Cardiac septum (tissue), 1 donor: ENCODE measurements at regions of chr5 and their contacts with region 1.

Region 1: DNA sequence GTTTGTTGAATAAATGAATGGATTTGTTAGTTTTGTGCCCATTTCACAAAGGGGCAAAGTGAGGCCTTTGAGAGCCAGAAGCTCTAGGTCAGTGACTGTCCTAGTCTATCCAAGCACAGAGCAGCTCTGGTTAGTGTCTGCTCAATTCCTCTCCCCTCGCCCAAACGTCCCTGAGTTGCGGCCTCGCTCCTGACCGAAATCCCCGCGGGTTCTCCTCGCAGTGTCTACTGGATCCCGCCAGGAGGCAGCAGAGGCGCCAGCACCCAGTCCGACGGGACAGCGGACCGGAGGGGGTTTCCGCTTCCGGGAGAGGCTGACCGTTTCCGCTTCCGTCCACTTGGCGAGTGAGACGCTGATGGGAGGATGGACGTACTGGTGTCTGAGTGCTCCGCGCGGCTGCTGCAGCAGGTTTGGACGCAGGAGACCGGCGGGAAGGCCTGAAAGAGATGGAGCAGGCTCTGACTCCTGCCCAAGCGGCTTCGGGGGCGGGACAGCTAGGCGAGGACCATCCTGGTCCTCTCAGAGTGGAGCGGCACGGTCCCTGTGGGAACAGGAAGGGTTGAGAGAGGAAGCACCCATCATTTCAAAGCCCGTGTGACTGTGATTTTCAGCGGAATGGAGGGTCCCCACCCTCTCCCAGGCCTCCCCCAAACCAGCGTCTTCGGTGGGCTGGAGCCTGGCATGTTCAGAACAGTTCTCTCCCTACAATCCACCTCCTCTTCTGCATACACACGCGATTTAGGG is at the start of gene RARS1:
- DNase-seq: peak; percentile 97
- total RNA-seq, gene RARS1: 47.4 TPM

Region 2: GRCh38 chr5:168270000-168270399 is 216.3 kb before region 1 on chr5:
- intact Hi-C with region 1: loop called (anchors 5 kb)
- DNase-seq: no peak

Region 3: GRCh38 chr5:168291962-168292776 is 194.1 kb before region 1 on chr5:
- intact Hi-C with region 1: no loop called
- DNase-seq: no peak

Region 4: GRCh38 chr5:168579488-168580226 is 93.3 kb after region 1 on chr5:
- intact Hi-C with region 1: loop called (anchors 5 kb)
- DNase-seq: peak; percentile 98

Region 5: DNA sequence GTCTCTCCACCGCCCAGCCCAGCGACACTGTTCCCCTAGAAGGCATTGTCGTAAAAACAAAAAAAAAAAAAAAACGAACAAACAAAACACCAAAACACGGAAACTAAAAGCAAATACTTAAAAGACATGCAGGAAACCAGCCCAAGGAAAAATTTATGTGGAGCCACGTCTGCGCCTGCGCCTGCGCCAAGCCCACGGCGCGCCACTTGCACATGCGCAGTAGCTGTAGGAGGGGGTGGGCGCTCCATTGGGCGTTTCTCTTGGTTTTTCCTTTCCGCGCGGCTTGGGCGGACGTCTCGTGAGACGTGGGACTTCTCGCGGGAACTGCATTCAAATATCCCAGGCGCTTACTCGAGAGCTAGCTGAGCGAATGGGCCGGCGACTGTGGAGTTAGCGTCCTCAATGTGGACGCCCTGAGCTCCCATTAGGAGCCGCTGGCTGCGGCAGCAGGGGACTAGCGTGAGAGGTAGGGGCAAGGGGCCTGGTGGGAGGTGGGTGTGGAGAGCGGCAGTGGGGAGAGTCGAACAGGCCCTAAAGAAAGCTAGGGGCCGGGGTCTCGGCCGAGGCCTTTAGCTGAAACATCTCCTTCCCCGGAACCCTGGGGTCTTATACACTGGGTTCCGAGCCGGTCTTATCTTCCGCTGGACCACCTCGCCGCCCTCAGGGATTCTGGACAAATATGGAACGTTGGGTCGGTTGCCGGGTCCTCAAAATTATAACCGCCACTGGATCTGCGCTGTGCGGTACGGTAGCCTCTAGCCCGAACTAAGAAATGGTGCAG is 1097.3 kb after region 1 on chr5 and contains the start of gene SPDL1:
- intact Hi-C with region 1: loop called (anchors 10 kb)
- DNase-seq: peak; percentile 97
- total RNA-seq, gene SPDL1: 4.6 TPM